Testis (tissue), 5 donors: ENCODE measurements at regions of chr11 and their contacts with region 1.

Region 1: GRCh38 chr11:94638902-94639373 is 71.8 kb downstream of the PIWIL4 start:
- DNase-seq: no peak
- H3K4me3 ChIP-seq: no peak overlapping the region
- H3K27ac ChIP-seq: no peak overlapping the region
- H3K4me1 ChIP-seq: no peaks in the 10 kb centered on the region
- H3K27me3 ChIP-seq: no peaks in the 10 kb centered on the region
- CTCF ChIP-seq: no peak
- POLR2A ChIP-seq: no peak

Region 2: DNA sequence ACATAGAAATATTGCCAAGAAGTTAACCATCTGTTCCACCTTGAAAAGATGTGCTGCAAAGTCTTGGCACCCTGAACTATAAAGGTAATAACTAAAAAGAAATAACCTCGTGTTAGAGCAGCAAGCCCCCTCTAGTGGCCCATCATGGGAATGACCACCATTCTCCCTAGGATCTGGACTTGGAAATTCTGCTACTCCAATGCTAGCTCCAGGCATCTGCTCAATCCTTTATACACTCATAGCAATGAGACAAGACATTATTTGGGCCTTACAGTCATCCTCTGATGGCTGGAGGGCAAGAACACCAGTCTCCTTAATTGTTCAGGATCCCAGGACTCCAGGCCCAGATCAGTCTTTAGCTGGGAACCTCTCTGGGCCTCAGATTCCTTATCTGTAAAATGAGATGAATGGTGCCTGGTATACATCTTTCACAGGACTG is 258.4 kb after region 1 on chr11:
- intact Hi-C with region 1: loop called (anchors 10 kb)
- DNase-seq: peak; percentile 79
- H3K4me3 ChIP-seq: no peak overlapping the region
- H3K27ac ChIP-seq: no peak overlapping the region
- H3K4me1 ChIP-seq: peaks cover 11% of the 10 kb centered on the region
- H3K27me3 ChIP-seq: no peaks in the 10 kb centered on the region
- CTCF ChIP-seq: peak; percentile 57 to 90 (median 87)
- POLR2A ChIP-seq: no peak